GM12878 (cell line): ENCODE measurements at regions of chr14 and their contacts with region 1.

Region 1: GRCh38 chr14:72420725-72421474 is 473.0 kb downstream of the DPF3 start:
- DNase-seq: peak; percentile 49
- ATAC-seq: peak; percentile 83
- H3K4me3 ChIP-seq: no peak overlapping the region
- H3K27ac ChIP-seq: no peak overlapping the region
- H3K4me1 ChIP-seq: no peaks in the 10 kb centered on the region
- H3K27me3 ChIP-seq: no peaks in the 10 kb centered on the region
- CTCF ChIP-seq: peak; percentile 91 to 97 (median 95)
- EP300 ChIP-seq: no peak
- POLR2A ChIP-seq: no peak
- RAD21 ChIP-seq: peak; percentile 99

Region 2: GRCh38 chr14:72291908-72292688 is 128.8 kb before region 1 on chr14:
- CTCF ChIA-PET with region 1: interaction called, 4 read pairs
- POLR2A ChIA-PET with region 1: no interaction called
- RAD21 ChIA-PET with region 1: interaction called, 3 read pairs
- SMC1A ChIA-PET with region 1: interaction called, 5 read pairs
- in situ Hi-C with region 1: no loop called
- intact Hi-C with region 1: loop called (anchors 5 kb)
- DNase-seq: peak; percentile 31
- ATAC-seq: peak; percentile 88
- H3K4me3 ChIP-seq: no peak overlapping the region
- H3K27ac ChIP-seq: no peak overlapping the region
- H3K4me1 ChIP-seq: no peaks in the 10 kb centered on the region
- H3K27me3 ChIP-seq: no peaks in the 10 kb centered on the region
- CTCF ChIP-seq: peak; percentile 68 to 73 (median 71)
- EP300 ChIP-seq: no peak
- POLR2A ChIP-seq: no peak
- RAD21 ChIP-seq: peak; percentile 84

Region 3: GRCh38 chr14:72451054-72451972 is 30.4 kb after region 1 on chr14:
- CTCF ChIA-PET with region 1: interaction called, 22 read pairs
- POLR2A ChIA-PET with region 1: no interaction called
- RAD21 ChIA-PET with region 1: interaction called, 4 read pairs
- SMC1A ChIA-PET with region 1: interaction called, 10 read pairs
- in situ Hi-C with region 1: no loop called
- intact Hi-C with region 1: no loop called
- DNase-seq: peak; percentile 84
- ATAC-seq: peak; percentile 92
- H3K4me3 ChIP-seq: no peak overlapping the region
- H3K27ac ChIP-seq: peak overlapping the region; percentile 63
- H3K4me1 ChIP-seq: peaks cover 27% of the 10 kb centered on the region
- H3K27me3 ChIP-seq: no peaks in the 10 kb centered on the region
- CTCF ChIP-seq: no peak
- EP300 ChIP-seq: no peak; a peak in 1 of 4 replicates
- POLR2A ChIP-seq: no peak
- RAD21 ChIP-seq: no peak